ENCODE measurements at regions of chr6 and their contacts with region 1.

Region 1: DNA sequence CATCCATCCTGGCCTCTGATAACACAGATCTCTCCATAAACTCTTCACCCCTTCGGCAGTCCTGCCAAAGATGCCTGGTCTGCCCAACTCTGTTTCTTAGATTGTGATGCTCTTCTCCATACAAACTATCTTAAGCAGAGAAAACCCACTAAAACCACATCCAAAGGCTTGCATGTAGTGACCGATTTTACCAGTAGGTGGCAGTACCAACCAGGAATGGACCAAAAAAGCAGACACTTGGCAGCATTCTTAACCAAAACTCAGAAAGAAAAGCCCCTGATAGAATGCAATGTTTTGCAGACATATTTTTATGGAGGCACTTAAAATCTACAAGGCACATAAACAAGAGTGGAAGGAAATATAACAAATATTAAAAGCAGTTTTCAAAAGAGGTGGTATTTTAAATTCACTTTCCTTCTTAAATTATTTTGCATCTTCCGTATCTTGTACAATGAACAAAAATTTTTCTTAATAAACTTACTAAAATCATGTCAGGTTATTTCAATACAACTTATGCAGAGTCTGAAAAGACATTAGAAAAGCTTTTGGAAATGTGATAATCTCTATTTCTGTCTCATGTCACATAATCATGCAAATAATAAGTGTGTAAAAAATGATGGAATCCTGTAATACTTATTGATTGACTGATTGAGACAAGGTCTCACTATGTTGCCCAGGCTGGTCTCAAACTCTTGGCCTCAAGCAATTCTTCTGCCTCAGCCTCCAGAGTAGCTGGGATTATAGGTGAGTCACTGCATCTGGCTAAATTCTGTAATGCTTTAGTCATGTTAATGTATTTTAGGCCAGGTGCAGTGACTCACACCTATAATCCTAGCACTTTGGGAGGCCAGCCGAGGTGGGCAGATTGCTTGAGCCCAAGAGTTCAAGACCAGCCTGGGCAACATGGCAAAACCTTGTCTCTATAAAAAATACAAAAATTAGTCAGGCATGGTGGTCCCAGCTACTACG is 29.4 kb downstream of the LRP11 start:
- H3K4me3 Mint-ChIP-seq: no peak overlapping the region
- H3K27ac Mint-ChIP-seq: no peak overlapping the region
- H3K4me1 Mint-ChIP-seq: no peaks in the 10 kb centered on the region
- H3K27me3 Mint-ChIP-seq: no peaks in the 10 kb centered on the region

Region 2: GRCh38 chr6:149746147-149746946 is 88.5 kb before region 1 on chr6 and contains the start of gene NUP43:
- intact Hi-C with region 1: no loop called
- H3K4me3 Mint-ChIP-seq: peak within 1 kb of the TSS; percentile 99
- H3K27ac Mint-ChIP-seq: peak within 1 kb of the TSS; percentile 95
- H3K4me1 Mint-ChIP-seq: peaks cover 28% of the 10 kb centered on the region
- H3K27me3 Mint-ChIP-seq: no peaks in the 10 kb centered on the region

Region 3: DNA sequence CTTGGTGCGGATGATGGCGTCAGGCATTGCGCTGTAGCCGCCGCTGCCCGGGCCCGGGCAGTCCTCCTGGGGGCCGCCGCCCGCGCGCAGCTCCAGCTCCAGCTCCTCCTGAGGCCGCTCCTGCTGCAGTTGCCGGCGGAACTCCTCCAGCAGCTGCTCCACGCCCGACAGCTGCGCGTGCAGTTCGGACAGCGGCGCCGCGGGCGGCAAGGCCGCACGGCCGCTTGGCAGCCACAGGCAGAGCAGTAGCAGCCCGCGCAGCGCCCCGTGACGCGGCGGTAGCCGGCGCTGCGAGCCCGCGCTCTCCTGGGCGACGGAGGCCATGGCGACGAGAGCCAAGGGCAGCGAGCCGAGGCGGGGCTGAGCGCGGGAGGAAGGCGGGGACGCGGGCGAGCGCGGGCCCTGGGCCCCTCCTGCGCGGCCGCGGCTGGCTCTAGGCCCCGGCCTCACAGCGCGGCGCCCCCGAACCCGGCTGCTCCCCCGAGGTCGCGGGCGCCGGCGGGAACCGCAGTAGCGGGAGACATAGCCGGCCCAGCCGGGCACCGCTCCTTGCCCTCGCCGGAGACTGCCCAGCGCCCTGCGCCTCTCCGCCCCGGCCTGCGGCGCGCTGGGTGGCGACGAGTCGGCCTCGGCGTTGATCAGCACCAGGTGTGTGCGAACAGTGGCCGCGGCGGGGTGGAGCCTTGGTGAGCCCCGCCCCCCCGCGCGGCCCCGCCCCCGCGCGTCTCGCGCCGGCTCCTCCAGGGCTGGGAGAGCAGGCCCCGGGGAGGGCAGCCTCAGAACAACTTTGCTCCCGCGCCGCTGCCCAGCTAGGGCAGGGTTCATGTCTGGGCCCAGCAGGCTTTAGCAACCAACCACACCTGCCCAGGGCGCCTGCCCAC is 29.1 kb after region 1 on chr6 and contains the start of gene LRP11:
- intact Hi-C with region 1: loop called (anchors 2 kb)
- H3K4me3 Mint-ChIP-seq: peak within 1 kb of the TSS; percentile 82
- H3K27ac Mint-ChIP-seq: peak within 1 kb of the TSS; percentile 85
- H3K4me1 Mint-ChIP-seq: peaks cover 19% of the 10 kb centered on the region
- H3K27me3 Mint-ChIP-seq: peaks cover 7% of the 10 kb centered on the region